WTC11 (cell line): ENCODE measurements at regions of chr6 and their contacts with region 1.

Region 1: GRCh38 chr6:6696867-6697531 is 108.5 kb downstream of the LY86 start:
- DNase-seq: peak; percentile 79
- ATAC-seq: peak; percentile 26
- H3K4me3 Mint-ChIP-seq: no peak overlapping the region
- H3K27ac Mint-ChIP-seq: no peak overlapping the region
- H3K4me1 Mint-ChIP-seq: peaks cover 46% of the 10 kb centered on the region
- H3K27me3 Mint-ChIP-seq: peaks cover 17% of the 10 kb centered on the region
- CTCF ChIP-seq: peak; percentile 80

Region 2: DNA sequence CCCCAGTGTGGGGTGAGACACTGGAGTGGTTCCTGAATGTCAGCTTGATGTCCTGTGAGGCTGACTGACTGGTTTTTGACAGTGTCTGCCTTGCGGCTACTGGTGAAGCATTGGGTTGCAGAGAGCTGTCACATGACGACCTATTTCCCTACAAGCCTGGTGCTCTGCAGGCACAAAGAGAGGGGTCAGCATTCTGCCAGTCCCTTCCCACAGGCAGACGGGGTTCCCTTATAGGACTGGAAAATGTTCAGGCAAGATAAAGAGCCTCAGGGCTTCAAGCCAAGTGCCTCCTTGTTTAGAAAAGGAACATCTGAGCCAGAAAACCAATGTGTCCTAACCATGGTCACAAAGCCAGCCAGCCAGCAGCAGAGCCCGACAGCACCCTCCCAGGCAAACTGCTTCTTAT is 97.5 kb before region 1 on chr6:
- CTCF ChIA-PET with region 1: no interaction called
- POLR2A ChIA-PET with region 1: no interaction called
- DNase-seq: no peak
- ATAC-seq: no peak
- H3K4me3 Mint-ChIP-seq: no peak overlapping the region
- H3K27ac Mint-ChIP-seq: no peak overlapping the region
- H3K4me1 Mint-ChIP-seq: peaks cover 15% of the 10 kb centered on the region
- H3K27me3 Mint-ChIP-seq: peaks cover 3% of the 10 kb centered on the region; the same call in 1 of the 2 replicates
- CTCF ChIP-seq: no peak

Region 3: DNA sequence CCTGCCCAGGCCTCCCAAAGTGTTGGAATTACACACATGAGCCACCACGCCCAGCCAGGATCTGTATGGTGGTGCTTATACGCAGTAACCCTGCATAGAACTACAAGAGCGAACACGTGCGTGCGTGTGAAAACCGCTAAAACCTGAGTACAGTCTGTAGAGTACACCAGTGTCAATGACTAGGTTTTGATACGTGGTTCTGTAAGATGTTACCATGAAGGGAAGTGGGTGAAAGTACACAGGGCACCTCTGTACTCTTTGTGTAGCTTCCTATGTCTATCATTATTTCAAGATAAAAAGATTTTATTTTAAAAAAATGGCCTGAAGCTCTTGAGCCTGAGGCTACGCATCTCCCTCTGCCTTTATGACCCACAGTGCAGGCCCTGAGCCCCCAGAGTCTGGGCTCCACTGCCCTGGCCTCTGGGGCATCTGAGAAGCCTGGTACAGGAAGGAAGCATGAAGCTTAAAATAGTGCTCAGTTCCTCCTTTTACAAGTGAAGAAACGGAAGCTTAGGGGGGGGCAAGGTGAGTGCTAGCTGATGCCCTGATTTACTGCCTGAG is 86.9 kb before region 1 on chr6:
- CTCF ChIA-PET with region 1: no interaction called
- POLR2A ChIA-PET with region 1: no interaction called
- DNase-seq: no peak
- ATAC-seq: no peak
- H3K4me3 Mint-ChIP-seq: no peak overlapping the region
- H3K27ac Mint-ChIP-seq: no peak overlapping the region
- H3K4me1 Mint-ChIP-seq: no peaks in the 10 kb centered on the region
- H3K27me3 Mint-ChIP-seq: no peaks in the 10 kb centered on the region; the same call in 1 of the 2 replicates
- CTCF ChIP-seq: no peak

Region 4: DNA sequence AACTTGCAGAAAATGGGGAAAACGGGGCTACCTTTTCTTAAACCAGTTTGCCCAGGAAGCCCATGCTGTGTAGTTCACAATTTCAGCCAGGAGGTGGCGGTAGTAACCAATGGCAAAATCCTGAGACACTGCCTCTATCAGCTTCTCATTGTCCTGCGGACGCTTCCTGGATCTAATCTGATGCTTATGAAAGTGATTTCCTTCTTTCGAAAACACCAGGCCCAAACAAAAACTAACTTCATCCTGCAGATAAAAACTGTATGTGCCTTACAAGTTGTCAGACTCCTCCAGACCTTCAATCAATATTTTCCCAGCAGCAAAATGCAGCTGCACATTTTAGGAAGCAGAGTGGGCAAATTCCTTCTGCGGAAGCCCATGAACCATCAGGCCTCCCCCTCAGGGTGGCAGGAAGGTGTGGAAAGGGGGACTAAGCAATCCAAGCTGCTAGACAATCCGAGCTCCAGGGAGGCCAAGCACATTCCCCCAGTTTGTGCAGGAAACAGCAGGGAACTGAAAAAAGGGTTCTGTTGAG is 20.0 kb before region 1 on chr6:
- CTCF ChIA-PET with region 1: interaction called, 35 read pairs
- POLR2A ChIA-PET with region 1: interaction called, 3 read pairs
- DNase-seq: peak; percentile 86
- ATAC-seq: peak; percentile 69
- H3K4me3 Mint-ChIP-seq: 0 out of 2 replicates have a peak overlapping the region, but pooled peaks have one; percentile 16
- H3K27ac Mint-ChIP-seq: peak overlapping the region; percentile 39
- H3K4me1 Mint-ChIP-seq: peaks cover 29% of the 10 kb centered on the region
- H3K27me3 Mint-ChIP-seq: no peaks in the 10 kb centered on the region
- CTCF ChIP-seq: peak; percentile 95

Region 5: GRCh38 chr6:6686748-6687601 is 10.0 kb before region 1 on chr6:
- CTCF ChIA-PET with region 1: interaction called, 45 read pairs
- POLR2A ChIA-PET with region 1: interaction called, 5 read pairs
- DNase-seq: peak; percentile 99
- ATAC-seq: peak; percentile 94
- H3K4me3 Mint-ChIP-seq: peak overlapping the region; percentile 77
- H3K27ac Mint-ChIP-seq: peak overlapping the region; percentile 98
- H3K4me1 Mint-ChIP-seq: peaks cover 37% of the 10 kb centered on the region
- H3K27me3 Mint-ChIP-seq: peaks cover 2% of the 10 kb centered on the region; the same call in 1 of the 2 replicates
- CTCF ChIP-seq: no peak

Region 6: GRCh38 chr6:6712258-6712999 is 15.4 kb after region 1 on chr6:
- CTCF ChIA-PET with region 1: interaction called, 44 read pairs
- POLR2A ChIA-PET with region 1: no interaction called
- DNase-seq: no peak
- ATAC-seq: peak; percentile 48
- H3K4me3 Mint-ChIP-seq: no peak overlapping the region
- H3K27ac Mint-ChIP-seq: no peak overlapping the region
- H3K4me1 Mint-ChIP-seq: peaks cover 38% of the 10 kb centered on the region
- H3K27me3 Mint-ChIP-seq: no peaks in the 10 kb centered on the region; the same call in 1 of the 2 replicates
- CTCF ChIP-seq: no peak